Posterior cingulate gyrus (tissue), 11 donors: ENCODE measurements at regions of chr3 and their contacts with region 1.

Region 1: GRCh38 chr3:11835028-11835639 is 11.6 kb downstream of the TAMM41 start:
- DNase-seq: no peak

Region 2: GRCh38 chr3:11379233-11379823 is 455.8 kb before region 1 on chr3:
- intact Hi-C with region 1: loop called (anchors 10 kb)
- DNase-seq: no peak

Region 3: DNA sequence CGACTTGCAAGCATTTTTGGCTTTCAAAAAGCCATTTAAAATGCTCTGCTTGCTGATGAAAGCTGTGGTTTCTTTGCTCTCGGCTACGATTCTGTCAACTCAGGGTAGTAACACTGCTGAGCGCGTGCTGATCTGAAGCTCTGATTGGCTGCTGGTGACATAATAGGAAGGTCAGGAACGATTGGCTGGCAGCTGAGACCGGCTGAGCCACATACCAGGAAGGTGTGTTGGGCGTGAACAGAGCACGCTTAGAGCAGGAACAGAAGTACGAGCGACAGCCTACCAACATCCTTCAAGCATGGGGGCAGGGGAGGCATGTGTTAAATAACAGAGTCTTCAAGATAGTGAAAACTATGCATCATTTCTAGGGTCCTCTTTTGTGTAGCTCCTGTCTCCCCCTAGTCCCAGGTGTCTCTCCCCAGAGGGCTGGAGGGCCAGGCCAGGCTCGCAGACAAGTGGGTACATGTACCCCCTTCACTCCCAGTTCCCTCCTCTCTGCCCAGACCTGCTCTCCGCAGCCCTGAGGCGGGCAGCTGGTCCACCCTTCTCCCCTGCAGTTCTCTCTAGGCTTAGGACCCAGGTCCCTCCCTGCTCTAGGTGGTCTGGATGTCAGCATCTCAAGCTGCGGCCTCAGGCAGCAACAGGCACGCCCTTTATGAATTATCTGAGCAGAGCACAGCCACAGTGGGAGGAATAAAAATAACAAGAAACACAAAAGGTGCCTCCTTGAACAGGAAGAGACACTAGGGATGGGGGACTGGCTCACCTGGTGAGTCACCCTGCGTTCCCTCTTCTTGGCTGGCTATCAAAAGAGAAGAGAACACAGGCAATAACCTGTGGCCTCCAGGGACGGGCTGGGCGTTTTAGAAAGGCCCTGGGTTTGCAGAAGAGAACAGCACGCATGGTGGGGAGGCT is 64.4 kb before region 1 on chr3:
- intact Hi-C with region 1: loop called (anchors 5 kb)
- DNase-seq: peak; percentile 35 to 95 (median 64)

Region 4: GRCh38 chr3:12193485-12194165 is 358.5 kb after region 1 on chr3:
- intact Hi-C with region 1: no loop called
- DNase-seq: no peak